HepG2 (cell line): ENCODE measurements at regions of chr22 and their contacts with region 1.

Region 1: DNA sequence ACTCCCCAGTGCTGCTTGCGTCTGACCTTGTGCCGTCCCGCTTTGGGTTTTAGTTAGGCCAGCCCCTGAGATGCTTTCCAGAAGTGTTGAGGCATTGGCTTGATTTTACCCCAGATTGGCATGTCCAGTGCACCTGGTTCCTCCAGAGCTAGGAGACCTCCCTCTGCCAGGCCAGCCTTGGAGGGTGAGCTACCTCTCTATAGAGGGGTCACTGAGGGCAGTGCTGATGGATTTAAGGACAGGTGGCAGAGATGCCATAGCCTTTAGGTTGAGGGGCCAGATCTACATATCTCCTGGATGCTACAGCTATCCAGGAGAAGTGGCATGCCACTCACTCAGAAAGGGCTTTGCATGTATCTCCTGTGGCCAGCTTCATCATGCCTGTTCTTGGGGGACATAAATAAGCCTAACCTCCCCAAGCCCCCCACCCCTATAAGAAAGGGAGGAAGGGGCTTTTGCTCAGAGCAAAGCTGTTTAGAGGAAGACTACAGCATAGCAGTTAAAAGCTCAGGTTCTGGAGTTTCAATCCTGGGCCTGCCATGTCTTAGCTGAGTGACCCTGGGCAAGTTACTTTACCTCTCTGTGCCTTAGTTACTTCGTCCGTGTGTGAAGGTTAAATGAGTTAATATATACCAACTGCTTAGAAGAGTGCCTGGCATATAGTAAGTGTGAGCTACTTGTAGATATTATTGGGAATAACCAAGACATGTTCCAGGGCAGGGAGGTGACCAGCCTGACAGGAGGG is 6.4 kb downstream of the UBE2L3 start:
- DNase-seq: no peak
- ATAC-seq: no peak
- H3K4me3 ChIP-seq: no peak overlapping the region
- H3K27ac ChIP-seq: no peak overlapping the region
- H3K4me1 ChIP-seq: peaks cover 83% of the 10 kb centered on the region
- H3K27me3 ChIP-seq: no peaks in the 10 kb centered on the region
- CTCF ChIP-seq: no peak
- EP300 ChIP-seq: no peak
- POLR2A ChIP-seq: no peak
- RAD21 ChIP-seq: no peak

Region 2: DNA sequence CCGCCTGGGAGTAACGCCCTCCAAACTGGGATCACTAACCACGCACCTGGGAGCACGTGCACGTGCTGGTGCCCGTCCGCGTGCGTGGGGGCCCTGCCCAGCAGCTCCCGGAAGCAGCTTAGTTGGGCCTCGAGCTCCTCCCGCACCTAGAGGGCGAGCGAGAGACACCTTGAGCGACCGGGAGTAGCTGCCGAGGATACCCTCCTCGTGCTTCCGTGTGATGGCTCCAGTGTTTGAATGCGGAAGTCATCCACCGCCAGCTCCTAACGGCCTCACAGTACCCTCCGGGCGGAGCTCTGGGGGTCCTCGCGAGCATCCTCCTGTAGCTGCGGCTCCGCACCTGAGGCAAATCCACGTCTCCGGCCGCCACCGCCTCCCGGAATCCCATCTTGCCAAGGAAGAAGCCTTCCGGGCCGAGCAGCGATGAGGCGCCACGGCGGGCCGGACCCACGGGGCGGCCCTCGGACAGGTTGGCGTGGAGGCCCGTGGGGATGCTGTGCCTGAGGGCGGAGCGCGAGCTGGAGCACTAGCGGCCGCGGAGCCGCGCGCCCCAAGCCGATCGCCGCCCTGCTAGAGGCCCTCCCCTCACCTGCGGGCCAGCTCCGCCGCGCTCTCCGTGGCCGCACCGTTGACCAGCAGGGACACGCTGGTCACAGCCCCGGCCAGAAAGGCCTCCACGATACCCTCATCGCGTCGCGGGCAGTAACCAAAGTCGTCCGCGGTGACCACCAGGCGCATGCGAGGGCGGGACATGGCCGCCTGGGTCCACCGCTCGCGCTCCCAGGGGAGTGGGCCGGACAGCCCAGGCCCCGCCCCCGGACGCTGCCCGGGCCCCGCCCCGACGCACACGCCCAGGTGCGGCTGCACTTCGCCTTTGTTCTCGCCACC is 55.6 kb after region 1 on chr22 and contains the start of gene YDJC:
- CTCF ChIA-PET with region 1: no interaction called
- POLR2A ChIA-PET with region 1: interaction called, 11 read pairs
- in situ Hi-C with region 1: no loop called
- intact Hi-C with region 1: no loop called
- DNase-seq: peak; percentile 90
- ATAC-seq: peak; percentile 88
- H3K4me3 ChIP-seq: peak within 1 kb of the TSS; percentile 85 to 99 (median 91)
- H3K27ac ChIP-seq: peak within 1 kb of the TSS; percentile 79
- H3K4me1 ChIP-seq: peaks cover 32% of the 10 kb centered on the region
- H3K27me3 ChIP-seq: no peaks in the 10 kb centered on the region
- CTCF ChIP-seq: peak; percentile 93
- EP300 ChIP-seq: no peak
- POLR2A ChIP-seq: peak; percentile 85 to 93
- RAD21 ChIP-seq: peak; percentile 16; the same call in 1 of the 2 replicates
- total RNA-seq, gene YDJC: 27.0 and 32.0 TPM in 2 replicates